ENCODE measurements at regions of chr12 and their contacts with region 1.

Region 1: GRCh38 chr12:119180380-119181040 is 1.8 kb downstream of the HSPB8 start:
- DNase-seq: peak; percentile 77
- ATAC-seq: peak; percentile 17 to 18

Region 2: GRCh38 chr12:119249326-119250155 is 69.0 kb after region 1 on chr12:
- intact Hi-C with region 1: loop called in 1 of 2 experiments (anchors 5 kb)
- DNase-seq: no peak
- ATAC-seq: no peak

Measured in left cardiac atrium (tissue), 4 donors.